ENCODE measurements at regions of chr10 and their contacts with region 1.

Region 1: DNA sequence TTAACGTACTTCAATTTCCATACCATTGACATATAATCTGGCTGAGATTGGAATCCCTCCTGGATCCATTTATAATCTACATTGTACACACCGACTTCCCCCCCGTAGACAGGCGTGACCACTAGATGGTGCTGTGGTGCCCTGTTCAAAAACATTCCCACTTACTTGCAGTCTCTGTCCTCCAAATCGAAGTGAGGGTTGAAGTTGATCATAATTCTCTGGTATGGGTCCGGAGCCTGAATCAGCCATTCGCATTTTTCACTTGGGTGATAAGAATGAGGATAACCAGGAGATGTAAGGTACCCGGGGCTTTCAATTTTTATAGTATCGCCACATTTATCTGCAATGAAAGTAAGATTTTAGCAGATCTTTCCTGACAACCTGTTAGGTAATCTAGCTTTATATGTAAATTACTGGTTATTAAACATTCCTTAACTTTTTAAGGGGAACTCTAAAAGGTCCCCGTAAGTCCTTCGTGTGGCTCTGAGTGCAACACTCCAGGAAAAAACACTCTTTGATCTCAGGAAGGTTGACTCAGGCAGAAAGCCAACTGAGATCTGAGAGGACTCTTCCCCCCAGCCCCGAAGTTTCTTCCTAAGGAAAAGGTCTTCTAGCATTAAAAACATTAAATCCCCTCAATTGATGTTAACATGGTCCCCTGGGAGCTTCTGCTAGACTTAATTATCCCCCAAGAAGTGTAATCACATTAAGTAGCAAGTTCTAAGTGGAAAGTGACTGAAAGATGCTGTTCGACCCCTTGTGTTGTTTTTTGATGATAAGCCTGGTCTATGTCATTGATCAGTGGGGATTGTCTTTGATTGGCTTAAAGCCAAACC is 3.7 kb downstream of the NRP1 start:
- DNase-seq: peak; percentile 93

Region 2: GRCh38 chr10:33180390-33180789 is 150.4 kb before region 1 on chr10:
- intact Hi-C with region 1: no loop called
- DNase-seq: no peak

Region 3: GRCh38 chr10:33196710-33197491 is 133.9 kb before region 1 on chr10:
- intact Hi-C with region 1: loop called in 1 of 2 experiments (anchors 5 kb)
- DNase-seq: no peak

Region 4: DNA sequence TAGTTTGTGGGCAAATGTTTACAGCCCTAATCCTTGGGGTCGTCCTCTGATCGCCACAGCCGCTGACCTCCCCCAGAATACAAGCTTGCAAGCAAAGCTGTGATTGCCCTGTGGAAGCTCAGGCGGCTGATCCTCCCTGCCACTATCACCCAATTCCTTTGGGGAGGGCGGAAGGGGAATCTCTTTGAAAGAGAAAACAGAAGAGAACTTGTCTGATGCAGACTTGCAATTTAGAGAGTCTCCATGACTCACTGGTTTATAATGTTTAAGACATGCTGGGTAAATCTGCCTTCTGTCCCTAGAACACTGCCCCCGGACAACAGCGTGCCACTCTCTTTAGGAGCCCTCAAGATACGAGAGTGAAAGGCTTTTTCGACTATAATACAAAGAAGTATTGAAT is 71.8 kb before region 1 on chr10:
- intact Hi-C with region 1: no loop called
- DNase-seq: no peak

Region 5: GRCh38 chr10:33306701-33307512 is 23.9 kb before region 1 on chr10:
- intact Hi-C with region 1: no loop called
- DNase-seq: no peak

Region 6: GRCh38 chr10:34102237-34102673 is 771.5 kb after region 1 on chr10:
- intact Hi-C with region 1: loop called in 1 of 2 experiments (anchors 10 kb)
- DNase-seq: peak; percentile 94

Region 7: GRCh38 chr10:34522546-34522945 is 1191.8 kb after region 1 on chr10:
- intact Hi-C with region 1: loop called in 1 of 2 experiments (anchors 10 kb)
- DNase-seq: no peak

Region 8: GRCh38 chr10:34637418-34637911 is 1306.7 kb after region 1 on chr10:
- intact Hi-C with region 1: loop called in 1 of 2 experiments (anchors 5 kb)
- DNase-seq: peak; percentile 86

Measured in posterior vena cava (tissue), 2 donors.